K562 (cell line): ENCODE measurements at regions of chr6 and their contacts with region 1.

Region 1: GRCh38 chr6:35452186-35453090 is at the start of gene FANCE:
- DNase-seq: peak; percentile 98 to 99 (median 99)
- ATAC-seq: peak; percentile 94
- H3K4me3 ChIP-seq: peak within 1 kb of the TSS; percentile 73
- H3K27ac ChIP-seq: peak within 1 kb of the TSS; percentile 78
- H3K4me1 ChIP-seq: peaks cover 18 to 27% of the 10 kb centered on the region in 2 experiments
- H3K27me3 ChIP-seq: peaks cover 1 to 5% of the 10 kb centered on the region in 2 experiments; a peak in 1 of 5 replicates
- CTCF ChIP-seq: no peak; a peak in 1 of 6 replicates
- EP300 ChIP-seq: no peak
- POLR2A ChIP-seq: peak; percentile 92
- RAD21 ChIP-seq: no peak
- polyA plus RNA-seq, gene FANCE: 5.7 to 5.9 TPM

Region 2: DNA sequence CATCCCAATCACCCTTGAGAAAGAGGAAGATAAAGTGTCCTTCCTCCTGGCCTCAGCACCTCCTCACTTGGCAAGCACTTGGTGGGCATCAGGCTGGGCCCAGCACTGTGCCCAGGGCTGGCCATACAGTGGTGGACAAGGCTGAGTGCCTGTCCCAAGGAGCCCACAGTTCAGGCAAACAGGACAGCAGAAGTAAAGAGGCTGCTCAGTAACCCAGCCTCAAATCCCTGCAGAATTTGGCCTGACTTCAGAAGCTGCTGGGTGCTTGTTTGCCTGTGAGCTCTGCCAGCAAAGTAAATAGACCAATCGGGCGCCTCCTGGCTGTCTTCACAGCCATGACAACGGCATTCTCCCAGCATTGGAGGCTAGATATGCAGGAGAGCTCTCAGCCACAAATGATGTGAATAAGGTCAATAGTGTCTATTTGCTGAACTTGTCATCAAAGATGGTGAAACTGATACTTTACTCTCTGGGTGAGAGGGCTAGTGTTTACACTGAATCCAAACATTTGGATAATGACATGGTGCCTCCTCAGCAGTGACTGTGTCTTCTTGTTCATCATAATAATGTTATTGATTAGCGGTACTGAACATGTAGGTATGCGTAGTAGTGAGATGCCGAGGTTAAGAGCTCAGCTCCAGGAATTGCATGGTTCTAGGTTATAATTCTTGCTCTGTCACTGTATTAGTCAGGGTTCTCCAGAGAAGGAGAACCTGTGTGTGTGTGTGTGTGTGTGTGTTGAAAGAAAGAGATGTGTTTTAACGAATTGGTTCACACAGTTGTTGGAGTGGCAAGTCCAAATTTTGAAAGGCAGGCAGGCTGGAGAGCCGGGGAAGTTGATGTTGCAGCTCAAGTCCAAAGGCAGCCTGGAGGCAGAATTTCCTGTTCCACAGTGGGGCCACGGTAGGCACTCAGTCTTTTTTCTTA is 37.1 kb before region 1 on chr6:
- CTCF ChIA-PET with region 1: no interaction called
- POLR2A ChIA-PET with region 1: interaction called, 3 read pairs
- in situ Hi-C with region 1: no loop called
- intact Hi-C with region 1: loop called (anchors 1 kb)
- DNase-seq: peak; percentile 65 to 78 (median 67)
- ATAC-seq: peak; percentile 83
- H3K4me3 ChIP-seq: no peak overlapping the region
- H3K27ac ChIP-seq: no peak overlapping the region
- H3K4me1 ChIP-seq: peaks cover 0 to 4% of the 10 kb centered on the region in 2 experiments; a peak in 2 of 5 replicates
- H3K27me3 ChIP-seq: no peaks in the 10 kb centered on the region
- CTCF ChIP-seq: peak; percentile 70 to 82 (median 72)
- EP300 ChIP-seq: no peak
- POLR2A ChIP-seq: no peak
- RAD21 ChIP-seq: peak; percentile 60 to 71